ENCODE measurements at regions of chr4 and their contacts with region 1.

Region 1: GRCh38 chr4:42656944-42657792 is at the start of gene ATP8A1:
- DNase-seq: peak; percentile 84
- ATAC-seq: peak; percentile 63
- H3K4me3 ChIP-seq: peak within 1 kb of the TSS; percentile 84
- H3K27ac ChIP-seq: peak within 1 kb of the TSS; percentile 82
- H3K4me1 ChIP-seq: peaks cover 39% of the 10 kb centered on the region
- H3K27me3 ChIP-seq: no peaks in the 10 kb centered on the region
- CTCF ChIP-seq: no peak
- total RNA-seq, gene ATP8A1: 3.9 and 5.3 TPM in 2 replicates

Region 2: GRCh38 chr4:40992472-40993295 is 1664.5 kb before region 1 on chr4:
- CTCF ChIA-PET with region 1: no interaction called
- POLR2A ChIA-PET with region 1: no interaction called
- intact Hi-C with region 1: loop called (anchors 10 kb)
- DNase-seq: peak; percentile 38
- ATAC-seq: no peak
- H3K4me3 ChIP-seq: no peak overlapping the region
- H3K27ac ChIP-seq: peak overlapping the region; percentile 25
- H3K4me1 ChIP-seq: peaks cover 64% of the 10 kb centered on the region
- H3K27me3 ChIP-seq: no peaks in the 10 kb centered on the region
- CTCF ChIP-seq: no peak